ENCODE measurements at regions of chr2 and their contacts with region 1.

Region 1: DNA sequence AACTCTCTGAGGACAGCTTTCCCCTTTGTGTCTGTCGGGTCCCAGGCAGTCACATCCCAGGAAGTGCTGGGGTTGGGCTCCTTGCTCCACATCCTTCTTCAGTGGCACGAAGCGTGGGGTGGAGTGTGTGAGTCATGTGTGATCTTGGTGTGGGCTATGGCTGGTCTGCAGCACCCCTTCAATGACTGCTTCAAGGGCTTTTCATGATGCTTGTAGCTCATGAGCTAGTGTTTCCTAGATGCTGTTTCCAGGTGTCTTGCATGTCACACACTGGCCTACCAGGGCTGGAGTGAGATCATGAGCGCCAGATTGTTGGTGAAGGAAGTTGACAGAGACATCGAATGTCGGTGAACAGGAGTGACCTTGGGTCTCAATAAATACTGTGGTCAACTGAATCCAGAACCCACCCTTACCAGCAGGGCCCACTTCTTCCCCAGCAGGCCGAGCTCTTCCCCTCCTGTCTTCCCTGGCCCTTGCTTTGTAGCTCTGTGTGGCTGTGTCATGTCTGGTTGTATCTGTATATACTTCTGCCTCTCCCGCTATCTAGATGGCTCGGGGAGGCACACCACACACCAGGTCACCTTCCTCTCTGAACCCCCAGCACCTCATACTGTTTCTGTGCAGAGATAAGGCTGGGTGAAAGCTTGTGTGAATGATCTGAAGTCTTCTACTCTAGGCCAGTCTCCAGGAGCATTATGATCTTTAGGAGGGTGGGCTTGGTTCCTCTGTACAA is 3.8 kb downstream of the C2orf92 start:
- DNase-seq: no peak
- H3K4me3 Mint-ChIP-seq: peak overlapping the region; percentile 34
- H3K27ac Mint-ChIP-seq: peak overlapping the region; percentile 98
- H3K4me1 Mint-ChIP-seq: peaks cover 39% of the 10 kb centered on the region
- H3K27me3 Mint-ChIP-seq: no peaks in the 10 kb centered on the region

Region 2: GRCh38 chr2:97688062-97688827 is 14.9 kb after region 1 on chr2:
- intact Hi-C with region 1: loop called (anchors 1 kb)
- DNase-seq: no peak
- H3K4me3 Mint-ChIP-seq: no peak overlapping the region
- H3K27ac Mint-ChIP-seq: peak overlapping the region; percentile 78
- H3K4me1 Mint-ChIP-seq: peaks cover 16% of the 10 kb centered on the region
- H3K27me3 Mint-ChIP-seq: no peaks in the 10 kb centered on the region

Region 3: GRCh38 chr2:97764559-97765263 is 91.4 kb after region 1 on chr2:
- intact Hi-C with region 1: no loop called
- DNase-seq: no peak
- H3K4me3 Mint-ChIP-seq: no peak overlapping the region
- H3K27ac Mint-ChIP-seq: no peak overlapping the region
- H3K4me1 Mint-ChIP-seq: peaks cover 36% of the 10 kb centered on the region
- H3K27me3 Mint-ChIP-seq: no peaks in the 10 kb centered on the region